Activated CD8-positive, alpha-beta T cell treated with anti-CD3 and anti-CD28 coated beads for 36 hours (primary cell): ENCODE measurements at regions of chr16 and their contacts with region 1.

Region 1: GRCh38 chr16:75251280-75252048 is at the start of gene BCAR1:
- DNase-seq: peak; percentile 35
- ATAC-seq: peak; percentile 69
- H3K4me3 Mint-ChIP-seq: peak within 1 kb of the TSS; percentile 53
- H3K27ac Mint-ChIP-seq: no peak within 1 kb of the TSS
- H3K4me1 Mint-ChIP-seq: no peaks in the 10 kb centered on the region
- H3K27me3 Mint-ChIP-seq: peaks cover 34% of the 10 kb centered on the region
- CTCF ChIP-seq: no peak
- total RNA-seq, gene BCAR1: 0.34 to 0.87 TPM

Region 2: DNA sequence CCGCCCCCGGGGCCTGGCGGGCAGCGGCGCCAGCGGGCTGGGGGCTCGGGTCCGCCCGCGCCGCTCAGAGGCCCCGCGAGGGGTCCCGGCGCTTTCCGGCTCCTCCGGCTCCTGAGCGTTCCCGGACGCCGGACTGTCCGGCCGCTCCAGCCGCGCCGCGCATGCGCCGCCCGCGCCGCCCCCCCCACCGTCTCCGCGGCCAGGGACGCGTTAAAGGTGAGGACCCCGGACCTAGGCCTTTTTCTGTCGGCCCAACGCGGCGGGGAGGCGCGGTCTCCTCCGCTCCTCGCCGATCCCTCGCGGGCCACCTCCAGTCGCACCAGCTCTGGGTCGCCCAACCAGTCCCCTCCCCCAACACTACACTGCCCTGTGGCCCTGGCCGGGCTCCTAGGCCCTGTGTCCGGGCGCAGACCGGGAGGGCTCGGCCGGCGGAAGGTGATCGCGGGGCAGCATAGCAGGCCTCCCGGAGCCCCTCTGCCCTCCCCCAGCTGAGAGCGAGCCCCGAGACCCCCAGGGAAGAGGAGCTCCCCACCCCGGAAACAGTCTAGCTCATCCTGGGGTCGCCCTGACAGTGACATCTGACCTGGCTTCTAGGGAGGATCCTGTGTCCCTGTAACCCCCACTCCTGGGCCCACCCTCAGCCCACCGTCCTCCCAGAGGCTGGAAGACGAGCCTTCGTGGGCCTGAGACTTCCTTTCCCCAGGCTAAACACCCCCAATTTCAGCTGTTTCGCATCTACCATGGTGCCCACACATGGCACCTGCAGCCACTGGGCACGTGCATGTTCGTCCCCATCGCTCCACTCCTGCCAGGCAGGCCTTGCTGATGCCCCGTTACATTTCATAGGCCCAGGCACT is 14.6 kb after region 1 on chr16:
- CTCF ChIA-PET with region 1: no interaction called
- POLR2A ChIA-PET with region 1: no interaction called
- intact Hi-C with region 1: no loop called
- DNase-seq: no peak
- ATAC-seq: peak; percentile 38
- H3K4me3 Mint-ChIP-seq: peak overlapping the region; percentile 65
- H3K27ac Mint-ChIP-seq: no peak overlapping the region
- H3K4me1 Mint-ChIP-seq: peaks cover 7% of the 10 kb centered on the region
- H3K27me3 Mint-ChIP-seq: peaks cover 41% of the 10 kb centered on the region
- CTCF ChIP-seq: no peak

Region 3: GRCh38 chr16:75385507-75386152 is 134.2 kb after region 1 on chr16:
- CTCF ChIA-PET with region 1: interaction called, 11 read pairs
- POLR2A ChIA-PET with region 1: no interaction called
- intact Hi-C with region 1: no loop called
- DNase-seq: no peak
- ATAC-seq: peak; percentile 37
- H3K4me3 Mint-ChIP-seq: no peak overlapping the region
- H3K27ac Mint-ChIP-seq: no peak overlapping the region
- H3K4me1 Mint-ChIP-seq: peaks cover 16% of the 10 kb centered on the region
- H3K27me3 Mint-ChIP-seq: peaks cover 2% of the 10 kb centered on the region
- CTCF ChIP-seq: peak; percentile 72